CD4-positive, alpha-beta T cell (primary cell): ENCODE measurements at regions of chr6 and their contacts with region 1.

Region 1: GRCh38 chr6:111129013-111129412 is 41.7 kb downstream of the SLC16A10 start:
- DNase-seq: no peak
- ATAC-seq: no peak
- H3K4me3 ChIP-seq: no peak overlapping the region
- H3K4me3 Mint-ChIP-seq: no peak overlapping the region
- H3K27ac ChIP-seq: no peak overlapping the region
- H3K27ac Mint-ChIP-seq: no peak overlapping the region
- H3K4me1 ChIP-seq: no peaks in the 10 kb centered on the region
- H3K4me1 Mint-ChIP-seq: peaks cover 14% of the 10 kb centered on the region
- H3K27me3 ChIP-seq: no peaks in the 10 kb centered on the region
- H3K27me3 Mint-ChIP-seq: no peaks in the 10 kb centered on the region
- CTCF ChIP-seq: no peak

Region 2: GRCh38 chr6:111171577-111172400 is 42.8 kb after region 1 on chr6:
- CTCF ChIA-PET with region 1: no interaction called
- POLR2A ChIA-PET with region 1: no interaction called
- intact Hi-C with region 1: loop called in 1 of 2 experiments (anchors 5 kb)
- DNase-seq: no peak
- ATAC-seq: no peak
- H3K4me3 ChIP-seq: no peak overlapping the region
- H3K4me3 Mint-ChIP-seq: no peak overlapping the region
- H3K27ac ChIP-seq: no peak overlapping the region
- H3K27ac Mint-ChIP-seq: no peak overlapping the region
- H3K4me1 ChIP-seq: peaks cover 11% of the 10 kb centered on the region
- H3K4me1 Mint-ChIP-seq: peaks cover 26% of the 10 kb centered on the region
- H3K27me3 ChIP-seq: no peaks in the 10 kb centered on the region
- H3K27me3 Mint-ChIP-seq: no peaks in the 10 kb centered on the region
- CTCF ChIP-seq: no peak